IMR-90 (cell line): ENCODE measurements at regions of chr12 and their contacts with region 1.

Region 1: DNA sequence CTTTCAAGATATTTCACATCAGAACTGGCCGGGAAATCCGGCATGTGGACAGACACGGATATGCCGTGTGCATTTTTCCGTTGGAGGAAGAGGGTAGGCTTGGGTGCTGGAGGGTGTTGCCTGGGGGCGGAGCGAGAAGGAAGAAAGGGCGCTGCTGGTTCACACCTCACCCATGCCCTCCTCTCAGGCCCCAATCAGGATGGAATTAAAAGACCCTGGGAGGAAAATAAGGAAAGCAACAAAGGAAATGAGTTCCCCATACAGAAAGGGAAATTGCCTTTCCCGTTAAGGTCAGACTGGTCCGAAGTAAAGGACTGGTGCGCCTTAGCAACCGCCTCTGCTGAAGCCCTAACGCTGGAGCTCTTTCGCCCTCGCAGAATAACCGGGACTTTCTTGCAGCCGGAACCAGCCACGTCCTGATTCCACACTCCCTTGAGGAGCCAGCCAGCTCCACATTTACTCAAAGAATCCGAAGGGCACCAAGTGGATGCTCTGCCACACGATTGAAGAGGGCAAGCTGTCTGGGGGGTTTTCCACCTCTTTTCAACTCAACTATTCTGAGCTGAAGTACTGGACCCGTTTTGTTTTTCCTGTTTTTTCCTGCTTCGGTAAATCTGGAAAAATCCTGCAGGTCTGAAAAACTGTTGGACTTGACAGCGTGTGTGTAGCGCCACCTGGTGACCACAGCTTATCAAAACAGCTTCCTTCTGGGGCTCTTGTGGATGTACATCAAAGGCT is 37.7 kb upstream of the BCL2L14 start:
- DNase-seq: peak; percentile 87
- ATAC-seq: peak; percentile 92
- H3K4me3 ChIP-seq: peak overlapping the region; percentile 55
- H3K27ac ChIP-seq: peak overlapping the region; percentile 70
- H3K4me1 ChIP-seq: no peaks in the 10 kb centered on the region
- H3K27me3 ChIP-seq: peaks cover 2% of the 10 kb centered on the region
- CTCF ChIP-seq: peak; percentile 90
- POLR2A ChIP-seq: peak; percentile 58; the same call in 1 of the 2 replicates
- RAD21 ChIP-seq: peak; percentile 96

Region 2: DNA sequence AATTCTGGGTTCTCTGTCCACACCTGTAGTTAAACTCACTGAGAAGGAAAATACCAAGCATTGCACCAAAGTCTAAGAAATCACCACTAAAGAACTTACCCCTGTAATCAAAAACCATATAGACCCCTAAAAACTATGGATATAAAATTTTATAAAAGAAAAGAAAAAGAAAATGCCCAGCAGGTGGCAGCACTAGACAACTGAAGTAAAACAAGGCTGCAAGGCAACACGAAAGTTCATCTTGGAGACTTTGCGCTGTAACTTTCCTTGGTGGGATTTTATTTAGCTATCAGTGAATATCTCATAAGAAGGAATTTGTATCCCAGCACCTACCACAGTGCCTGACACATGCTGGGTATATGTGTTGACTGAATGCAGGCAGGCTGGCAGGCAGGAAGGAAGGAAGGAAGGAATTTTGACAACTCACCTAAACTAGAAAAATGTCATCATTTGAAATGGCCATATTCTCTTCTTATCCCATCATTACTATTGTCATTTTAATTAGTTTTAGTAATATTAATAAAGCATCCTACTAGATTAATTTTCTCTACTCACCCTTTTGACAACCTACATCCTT is 451.8 kb before region 1 on chr12:
- CTCF ChIA-PET with region 1: interaction called, 54 read pairs
- POLR2A ChIA-PET with region 1: interaction called, 4 read pairs
- dilution Hi-C with region 1: no loop called
- in situ Hi-C with region 1: loop called (anchors 5 kb)
- intact Hi-C with region 1: loop called (anchors 1 kb)
- DNase-seq: peak; percentile 78
- ATAC-seq: 0 out of 2 replicates have a peak, but pooled peaks have one; percentile 19
- H3K4me3 ChIP-seq: no peak overlapping the region
- H3K27ac ChIP-seq: no peak overlapping the region
- H3K4me1 ChIP-seq: peaks cover 7% of the 10 kb centered on the region
- H3K27me3 ChIP-seq: peaks cover 5% of the 10 kb centered on the region
- CTCF ChIP-seq: peak; percentile 63
- POLR2A ChIP-seq: no peak
- RAD21 ChIP-seq: peak; percentile 87

Region 3: GRCh38 chr12:11798856-11799501 is 234.0 kb before region 1 on chr12:
- CTCF ChIA-PET with region 1: interaction called, 3 read pairs
- POLR2A ChIA-PET with region 1: no interaction called
- dilution Hi-C with region 1: no loop called
- in situ Hi-C with region 1: no loop called
- intact Hi-C with region 1: loop called (anchors 5 kb)
- DNase-seq: peak; percentile 88
- ATAC-seq: no peak
- H3K4me3 ChIP-seq: no peak overlapping the region
- H3K27ac ChIP-seq: peak overlapping the region; percentile 96
- H3K4me1 ChIP-seq: peaks cover 33% of the 10 kb centered on the region
- H3K27me3 ChIP-seq: no peaks in the 10 kb centered on the region
- CTCF ChIP-seq: no peak
- POLR2A ChIP-seq: no peak
- RAD21 ChIP-seq: no peak

Region 4: DNA sequence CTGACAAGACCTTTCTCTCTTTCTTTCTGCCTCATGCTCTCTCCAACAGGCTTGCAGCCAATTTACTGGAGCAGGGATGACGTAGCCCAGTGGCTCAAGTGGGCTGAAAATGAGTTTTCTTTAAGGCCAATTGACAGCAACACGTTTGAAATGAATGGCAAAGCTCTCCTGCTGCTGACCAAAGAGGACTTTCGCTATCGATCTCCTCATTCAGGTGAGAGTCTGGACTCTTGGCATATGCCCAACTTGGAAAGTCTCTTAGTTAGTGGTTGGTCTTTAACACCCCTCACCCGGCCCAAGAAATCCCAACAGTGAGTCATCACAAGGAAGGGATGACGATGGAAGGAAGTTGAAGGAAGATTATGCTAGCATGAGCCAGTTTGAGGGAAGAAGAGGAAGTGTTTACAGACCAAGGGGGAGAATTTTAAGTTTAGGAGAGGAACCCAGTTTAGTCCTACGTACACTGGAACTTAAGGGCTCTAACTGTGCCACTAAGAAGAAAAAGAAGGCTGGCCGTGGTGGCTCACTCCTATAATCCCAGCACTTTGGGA is 193.9 kb before region 1 on chr12:
- CTCF ChIA-PET with region 1: no interaction called
- POLR2A ChIA-PET with region 1: no interaction called
- dilution Hi-C with region 1: no loop called
- in situ Hi-C with region 1: no loop called
- intact Hi-C with region 1: no loop called
- DNase-seq: peak; percentile 61
- ATAC-seq: 0 out of 2 replicates have a peak, but pooled peaks have one; percentile 48
- H3K4me3 ChIP-seq: no peak overlapping the region
- H3K27ac ChIP-seq: no peak overlapping the region
- H3K4me1 ChIP-seq: peaks cover 8% of the 10 kb centered on the region; the same call in 1 of the 2 replicates
- H3K27me3 ChIP-seq: no peaks in the 10 kb centered on the region
- CTCF ChIP-seq: no peak
- POLR2A ChIP-seq: no peak
- RAD21 ChIP-seq: no peak

Region 5: GRCh38 chr12:12327802-12328201 is 294.8 kb after region 1 on chr12:
- CTCF ChIA-PET with region 1: interaction called, 3 read pairs
- POLR2A ChIA-PET with region 1: no interaction called
- dilution Hi-C with region 1: no loop called
- in situ Hi-C with region 1: no loop called
- intact Hi-C with region 1: loop called (anchors 1 kb)
- DNase-seq: peak; percentile 73
- ATAC-seq: peak; percentile 65
- H3K4me3 ChIP-seq: no peak overlapping the region
- H3K27ac ChIP-seq: no peak overlapping the region
- H3K4me1 ChIP-seq: peaks cover 2% of the 10 kb centered on the region; the same call in 1 of the 2 replicates
- H3K27me3 ChIP-seq: 0 out of 2 replicates have a peak, but pooled peaks cover 2% of the 10 kb centered on the region
- CTCF ChIP-seq: peak; percentile 80
- POLR2A ChIP-seq: no peak
- RAD21 ChIP-seq: peak; percentile 82

Region 6: DNA sequence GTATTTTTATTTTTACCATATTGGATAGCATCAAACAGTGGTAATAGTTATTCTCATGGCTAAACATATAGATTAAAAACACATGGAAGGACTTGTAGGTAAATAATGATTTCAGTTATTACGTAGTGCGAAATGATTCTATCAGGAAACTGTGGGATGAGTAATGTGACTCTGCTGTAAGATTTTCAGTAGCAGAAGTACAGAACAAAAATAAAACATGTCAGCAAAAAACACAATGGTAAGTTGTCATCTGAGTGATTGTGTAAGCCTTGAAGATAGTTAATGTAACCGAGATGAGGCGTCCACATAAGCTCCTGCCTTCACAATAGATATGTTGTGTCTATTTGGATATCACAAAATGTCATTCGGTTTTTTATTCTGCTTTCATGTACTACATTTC is 423.6 kb after region 1 on chr12:
- CTCF ChIA-PET with region 1: no interaction called
- POLR2A ChIA-PET with region 1: no interaction called
- dilution Hi-C with region 1: no loop called
- in situ Hi-C with region 1: no loop called
- intact Hi-C with region 1: no loop called
- DNase-seq: peak; percentile 75
- ATAC-seq: no peak
- H3K4me3 ChIP-seq: no peak overlapping the region
- H3K27ac ChIP-seq: no peak overlapping the region
- H3K4me1 ChIP-seq: peaks cover 3% of the 10 kb centered on the region; the same call in 1 of the 2 replicates
- H3K27me3 ChIP-seq: no peaks in the 10 kb centered on the region
- CTCF ChIP-seq: no peak
- POLR2A ChIP-seq: no peak
- RAD21 ChIP-seq: no peak